Body of pancreas (tissue), 4 donors: ENCODE measurements at regions of chr17 and their contacts with region 1.

Region 1: GRCh38 chr17:34542700-34543336 is 36.6 kb upstream of the TMEM132E start:
- DNase-seq: peak in 3 of 4 donors; percentile 18 to 41 (median 39)
- ATAC-seq: no peak
- H3K4me3 ChIP-seq: no peak overlapping the region
- H3K27ac ChIP-seq: no peak overlapping the region
- H3K4me1 ChIP-seq: no peaks in the 10 kb centered on the region
- H3K27me3 ChIP-seq: peaks cover 0 to 9% of the 10 kb centered on the region in 2 donors
- CTCF ChIP-seq: peak; percentile 39 to 70 (median 61)
- POLR2A ChIP-seq: no peak

Region 2: DNA sequence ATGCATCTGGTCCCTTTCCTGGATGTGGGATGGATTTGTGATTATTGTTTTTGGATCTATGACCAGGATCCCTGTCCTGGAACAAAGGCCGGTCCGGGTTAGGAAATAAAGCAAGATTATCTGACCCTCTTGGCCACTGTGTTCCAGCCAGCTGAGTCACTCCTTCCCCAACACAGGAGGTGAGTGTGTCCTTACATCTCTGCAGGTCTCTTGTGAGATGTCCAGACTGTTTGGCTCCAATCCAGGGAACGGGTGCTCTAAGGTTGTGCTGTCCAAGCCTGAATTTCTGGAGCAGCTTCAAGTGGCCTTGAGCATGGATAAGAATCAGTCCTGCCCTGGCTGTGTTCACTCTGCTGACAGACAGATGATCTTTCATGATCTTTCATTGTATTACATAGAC is 424.3 kb before region 1 on chr17:
- intact Hi-C with region 1: no loop called
- DNase-seq: no peak
- ATAC-seq: no peak
- H3K4me3 ChIP-seq: no peak overlapping the region
- H3K27ac ChIP-seq: no peak overlapping the region
- H3K4me1 ChIP-seq: no peaks in the 10 kb centered on the region
- H3K27me3 ChIP-seq: no peaks in the 10 kb centered on the region
- CTCF ChIP-seq: no peak
- POLR2A ChIP-seq: no peak

Region 3: DNA sequence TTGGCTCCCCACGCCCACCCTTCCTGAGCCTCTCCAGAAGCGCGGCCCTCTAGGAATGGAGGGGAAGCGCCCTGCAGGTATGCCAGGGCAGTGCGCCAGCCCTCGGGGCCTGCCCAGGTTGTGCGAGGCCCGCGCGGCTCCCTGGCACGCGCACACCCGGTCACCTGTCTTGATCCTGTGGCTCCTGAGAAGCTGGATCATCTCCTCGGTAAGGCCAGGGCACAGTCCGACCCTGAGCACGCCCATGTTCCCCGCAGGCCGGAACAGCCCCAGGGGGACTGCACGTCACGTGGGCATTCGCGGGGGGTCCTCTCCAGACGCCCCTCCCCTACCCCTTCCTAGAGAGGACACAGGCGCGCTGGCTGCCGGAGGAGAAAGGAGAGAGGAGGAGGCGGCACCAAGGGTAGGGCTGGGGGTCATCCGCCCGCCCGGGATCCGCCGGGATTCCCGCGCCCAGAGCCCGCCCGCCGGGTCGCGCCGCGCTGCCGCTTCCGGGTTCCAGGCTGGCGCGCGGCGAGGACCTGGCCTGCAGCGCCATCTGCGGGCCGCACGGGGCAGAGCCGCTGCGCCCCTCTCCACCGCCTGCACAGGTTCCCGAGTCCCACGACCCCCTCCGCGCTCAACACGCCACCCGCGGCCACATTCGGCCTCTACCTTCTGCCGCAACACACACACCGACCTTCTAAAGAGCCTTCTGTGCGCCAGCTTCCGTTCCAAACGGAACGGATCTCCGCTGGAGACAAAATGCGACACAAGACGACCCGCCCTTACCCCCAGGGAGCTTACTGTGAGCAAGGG is 576.7 kb after region 1 on chr17 and contains the start of gene RAD51D:
- intact Hi-C with region 1: loop called (anchors 10 kb)
- DNase-seq: peak; percentile 73 to 83 (median 78)
- ATAC-seq: peak; percentile 96
- H3K4me3 ChIP-seq: peak within 1 kb of the TSS; percentile 60 to 65
- H3K27ac ChIP-seq: peak within 1 kb of the TSS; percentile 8 to 78 (median 69)
- H3K4me1 ChIP-seq: peaks cover 17% of the 10 kb centered on the region
- H3K27me3 ChIP-seq: no peaks in the 10 kb centered on the region
- CTCF ChIP-seq: peak; percentile 67 to 99 (median 93)
- POLR2A ChIP-seq: peak in 2 of 3 donors; percentile 56 to 61
- total RNA-seq, gene RAD51D: 3.4 to 16.2 TPM